ENCODE measurements at regions of chr1 and their contacts with region 1.

Region 1: DNA sequence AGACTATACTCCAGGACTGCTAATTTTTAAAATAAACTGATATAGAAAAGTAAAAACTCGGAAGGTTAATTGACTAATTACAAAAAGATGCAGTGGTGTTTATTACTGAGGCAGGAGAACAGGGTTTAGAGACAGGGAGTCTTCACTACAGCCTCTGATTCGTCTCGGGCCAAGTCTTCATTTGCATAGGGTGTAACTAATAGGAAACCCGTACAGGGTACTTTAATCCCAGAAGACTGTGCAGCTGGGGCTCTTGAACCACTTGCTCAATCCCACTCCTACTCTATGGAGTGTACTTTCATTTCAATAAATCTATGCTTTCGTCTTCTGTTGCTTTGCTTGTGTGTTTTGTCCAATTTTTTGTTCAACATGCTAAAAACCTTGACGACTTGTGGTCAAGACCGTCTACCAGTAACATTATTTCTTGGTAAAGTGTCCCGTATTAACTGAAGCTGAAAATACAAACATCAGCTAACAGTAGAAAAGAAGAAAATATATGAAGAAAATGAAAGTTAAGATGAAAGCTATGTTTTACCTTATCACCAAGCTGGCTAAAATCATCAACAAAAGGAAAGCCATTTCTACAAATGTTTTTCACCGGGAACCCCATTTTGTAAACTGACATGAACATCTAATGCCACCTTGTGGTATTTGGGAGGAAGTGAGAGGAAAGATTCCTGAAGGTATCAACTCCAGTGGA is 8.0 kb downstream of the SDHB start:
- DNase-seq: peak in 1 of 2 experiments; percentile 38
- H3K4me3 ChIP-seq: no peak overlapping the region
- H3K27ac ChIP-seq: no peak overlapping the region
- H3K4me1 ChIP-seq: no peaks in the 10 kb centered on the region
- H3K27me3 ChIP-seq: no peaks in the 10 kb centered on the region
- CTCF ChIP-seq: peak; percentile 75

Region 2: GRCh38 chr1:15736038-15736889 is 1309.5 kb before region 1 on chr1 and contains the start of gene SLC25A34:
- CTCF ChIA-PET with region 1: no interaction called
- POLR2A ChIA-PET with region 1: no interaction called
- intact Hi-C with region 1: no loop called
- DNase-seq: no peak
- H3K4me3 ChIP-seq: no peak within 1 kb of the TSS
- H3K27ac ChIP-seq: no peak within 1 kb of the TSS
- H3K4me1 ChIP-seq: no peaks in the 10 kb centered on the region
- H3K27me3 ChIP-seq: no peaks in the 10 kb centered on the region
- CTCF ChIP-seq: no peak
- total RNA-seq, gene SLC25A34: 1.4 and 1.7 TPM in 2 replicates

Region 3: GRCh38 chr1:16621300-16621658 is 424.5 kb before region 1 on chr1:
- CTCF ChIA-PET with region 1: no interaction called
- POLR2A ChIA-PET with region 1: no interaction called
- intact Hi-C with region 1: loop called (anchors 2 kb)
- DNase-seq: no peak
- H3K4me3 ChIP-seq: no peak overlapping the region
- H3K27ac ChIP-seq: no peak overlapping the region
- H3K4me1 ChIP-seq: no peaks in the 10 kb centered on the region
- H3K27me3 ChIP-seq: no peaks in the 10 kb centered on the region
- CTCF ChIP-seq: 0 out of 2 replicates have a peak, but pooled peaks have one; percentile 11

Region 4: GRCh38 chr1:16913833-16914662 is 131.7 kb before region 1 on chr1:
- CTCF ChIA-PET with region 1: no interaction called
- POLR2A ChIA-PET with region 1: no interaction called
- intact Hi-C with region 1: loop called (anchors 5 kb)
- DNase-seq: peak; percentile 55 to 85
- H3K4me3 ChIP-seq: peak overlapping the region; percentile 65
- H3K27ac ChIP-seq: no peak overlapping the region
- H3K4me1 ChIP-seq: no peaks in the 10 kb centered on the region
- H3K27me3 ChIP-seq: no peaks in the 10 kb centered on the region
- CTCF ChIP-seq: no peak

Region 5: GRCh38 chr1:16946646-16947045 is 99.1 kb before region 1 on chr1:
- CTCF ChIA-PET with region 1: interaction called, 9 read pairs
- POLR2A ChIA-PET with region 1: no interaction called
- intact Hi-C with region 1: loop called (anchors 1 kb)
- DNase-seq: no peak
- H3K4me3 ChIP-seq: no peak overlapping the region
- H3K27ac ChIP-seq: no peak overlapping the region
- H3K4me1 ChIP-seq: no peaks in the 10 kb centered on the region
- H3K27me3 ChIP-seq: no peaks in the 10 kb centered on the region
- CTCF ChIP-seq: no peak

Region 6: GRCh38 chr1:16984717-16985116 is 61.1 kb before region 1 on chr1:
- CTCF ChIA-PET with region 1: interaction called, 13 read pairs
- POLR2A ChIA-PET with region 1: no interaction called
- intact Hi-C with region 1: no loop called
- DNase-seq: peak; percentile 70 to 81
- H3K4me3 ChIP-seq: no peak overlapping the region
- H3K27ac ChIP-seq: peak overlapping the region; percentile 43; the same call in 1 of the 2 replicates
- H3K4me1 ChIP-seq: peaks cover 11% of the 10 kb centered on the region
- H3K27me3 ChIP-seq: no peaks in the 10 kb centered on the region
- CTCF ChIP-seq: no peak

Region 7: GRCh38 chr1:17030206-17030605 is 15.6 kb before region 1 on chr1:
- CTCF ChIA-PET with region 1: no interaction called
- POLR2A ChIA-PET with region 1: no interaction called
- intact Hi-C with region 1: no loop called
- DNase-seq: no peak
- H3K4me3 ChIP-seq: no peak overlapping the region
- H3K27ac ChIP-seq: no peak overlapping the region
- H3K4me1 ChIP-seq: no peaks in the 10 kb centered on the region
- H3K27me3 ChIP-seq: no peaks in the 10 kb centered on the region
- CTCF ChIP-seq: no peak

Region 8: DNA sequence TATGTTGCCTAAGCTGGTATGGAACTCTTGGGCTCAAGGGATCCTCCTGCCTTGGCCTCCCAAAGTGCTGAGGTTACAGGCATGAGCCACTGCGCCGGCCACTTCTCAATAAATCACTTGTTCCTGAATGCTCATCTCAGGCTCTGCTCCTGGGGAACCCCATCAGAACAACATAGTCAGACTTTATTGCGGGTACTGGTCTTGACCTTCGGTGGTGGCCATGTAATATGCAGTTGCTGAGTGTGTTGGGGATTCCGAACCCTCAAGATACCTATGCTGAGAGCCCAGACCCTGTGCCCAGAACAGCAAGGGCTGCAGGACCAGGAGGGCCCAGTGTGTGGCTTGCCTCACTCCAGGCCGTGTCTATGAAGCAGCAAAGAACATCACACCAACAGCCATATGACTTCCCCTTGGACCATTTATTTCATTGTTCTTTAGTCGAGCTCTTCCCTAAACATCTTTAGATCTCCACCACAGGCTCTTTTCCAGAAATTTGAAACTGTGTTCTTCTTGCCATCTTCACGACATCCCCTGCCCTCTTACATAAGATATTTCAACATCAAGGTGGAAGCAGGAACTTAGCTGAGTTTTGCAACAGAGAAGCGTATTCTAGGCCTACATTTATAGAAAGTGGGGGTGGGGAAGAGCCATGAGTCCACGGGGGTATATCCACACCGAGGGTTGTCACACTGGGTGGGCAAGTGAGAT is 20.7 kb after region 1 on chr1:
- CTCF ChIA-PET with region 1: no interaction called
- POLR2A ChIA-PET with region 1: no interaction called
- intact Hi-C with region 1: no loop called
- DNase-seq: no peak
- H3K4me3 ChIP-seq: no peak overlapping the region
- H3K27ac ChIP-seq: no peak overlapping the region
- H3K4me1 ChIP-seq: no peaks in the 10 kb centered on the region
- H3K27me3 ChIP-seq: no peaks in the 10 kb centered on the region
- CTCF ChIP-seq: no peak

Region 9: GRCh38 chr1:17826165-17826488 is 780.3 kb after region 1 on chr1:
- CTCF ChIA-PET with region 1: no interaction called
- POLR2A ChIA-PET with region 1: no interaction called
- intact Hi-C with region 1: no loop called
- DNase-seq: peak in 1 of 2 experiments; percentile 14
- H3K4me3 ChIP-seq: no peak overlapping the region
- H3K27ac ChIP-seq: no peak overlapping the region
- H3K4me1 ChIP-seq: no peaks in the 10 kb centered on the region
- H3K27me3 ChIP-seq: no peaks in the 10 kb centered on the region
- CTCF ChIP-seq: peak; percentile 61